CD4-positive, alpha-beta T cell (primary cell): ENCODE measurements at regions of chr11 and their contacts with region 1.

Region 1: GRCh38 chr11:2256923-2257716 is 13.3 kb downstream of the ASCL2 start:
- DNase-seq: peak in 1 of 14 experiments; percentile 11
- ATAC-seq: no peak
- H3K4me3 ChIP-seq: no peak overlapping the region
- H3K4me3 Mint-ChIP-seq: no peak overlapping the region
- H3K27ac ChIP-seq: no peak overlapping the region
- H3K27ac Mint-ChIP-seq: no peak overlapping the region
- H3K4me1 ChIP-seq: no peaks in the 10 kb centered on the region
- H3K4me1 Mint-ChIP-seq: no peaks in the 10 kb centered on the region
- H3K27me3 ChIP-seq: no peaks in the 10 kb centered on the region
- H3K27me3 Mint-ChIP-seq: no peaks in the 10 kb centered on the region
- CTCF ChIP-seq: no peak

Region 2: DNA sequence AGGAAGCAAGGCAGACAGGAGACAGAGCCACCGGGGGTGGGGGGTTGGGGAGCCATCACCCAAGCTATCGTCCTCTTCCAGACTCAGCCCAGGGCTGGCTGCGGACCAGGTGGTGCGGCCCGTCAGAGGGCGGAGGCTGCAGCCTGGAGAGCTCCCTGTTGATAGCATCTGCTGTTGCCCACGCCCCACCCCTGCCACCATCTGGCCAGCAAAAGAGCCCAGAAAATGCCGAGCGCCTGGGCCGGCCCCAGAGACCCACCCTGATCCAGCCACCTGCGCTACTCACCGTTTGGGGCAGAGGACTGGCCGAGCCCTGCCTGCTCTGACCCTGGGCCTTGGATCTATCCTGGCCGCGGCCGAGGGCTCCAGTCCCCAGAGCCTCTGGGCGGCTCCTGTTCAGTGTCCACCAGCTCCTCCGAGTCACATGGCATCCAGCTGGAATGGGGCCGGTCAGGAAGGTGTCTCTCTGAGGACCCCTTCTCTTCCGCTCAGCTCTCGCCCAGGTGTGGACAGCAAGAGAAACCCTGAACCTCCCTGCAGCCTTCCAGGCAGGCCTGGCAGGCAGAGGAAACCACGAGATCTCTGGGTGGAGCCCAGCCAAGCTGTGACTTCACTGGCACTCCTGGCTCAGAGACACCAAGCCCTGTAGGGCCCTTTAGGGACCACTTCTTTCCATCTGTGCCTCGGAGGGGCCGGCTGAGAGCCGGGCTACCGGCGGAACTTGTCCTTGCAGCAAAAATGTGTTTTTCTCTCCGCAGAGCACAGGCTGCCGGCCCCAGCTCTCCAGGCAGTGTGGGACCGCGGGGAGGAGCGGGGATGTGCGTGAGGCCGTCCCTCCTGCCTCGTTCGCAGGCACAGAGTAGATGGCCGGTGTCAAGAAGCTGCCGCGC is 975.0 kb after region 1 on chr11 and contains the start of gene MRGPRE:
- CTCF ChIA-PET with region 1: no interaction called
- POLR2A ChIA-PET with region 1: no interaction called
- intact Hi-C with region 1: loop called in 1 of 2 experiments (anchors 10 kb)
- DNase-seq: no peak
- ATAC-seq: no peak
- H3K4me3 ChIP-seq: no peak within 1 kb of the TSS
- H3K4me3 Mint-ChIP-seq: no peak within 1 kb of the TSS
- H3K27ac ChIP-seq: no peak within 1 kb of the TSS
- H3K27ac Mint-ChIP-seq: no peak within 1 kb of the TSS
- H3K4me1 ChIP-seq: no peaks in the 10 kb centered on the region
- H3K4me1 Mint-ChIP-seq: no peaks in the 10 kb centered on the region
- H3K27me3 ChIP-seq: no peaks in the 10 kb centered on the region
- H3K27me3 Mint-ChIP-seq: no peaks in the 10 kb centered on the region
- CTCF ChIP-seq: no peak
- total RNA-seq, gene MRGPRE: not detected